Spleen (tissue), 13 donors: ENCODE measurements at regions of chr3 and their contacts with region 1.

Region 1: DNA sequence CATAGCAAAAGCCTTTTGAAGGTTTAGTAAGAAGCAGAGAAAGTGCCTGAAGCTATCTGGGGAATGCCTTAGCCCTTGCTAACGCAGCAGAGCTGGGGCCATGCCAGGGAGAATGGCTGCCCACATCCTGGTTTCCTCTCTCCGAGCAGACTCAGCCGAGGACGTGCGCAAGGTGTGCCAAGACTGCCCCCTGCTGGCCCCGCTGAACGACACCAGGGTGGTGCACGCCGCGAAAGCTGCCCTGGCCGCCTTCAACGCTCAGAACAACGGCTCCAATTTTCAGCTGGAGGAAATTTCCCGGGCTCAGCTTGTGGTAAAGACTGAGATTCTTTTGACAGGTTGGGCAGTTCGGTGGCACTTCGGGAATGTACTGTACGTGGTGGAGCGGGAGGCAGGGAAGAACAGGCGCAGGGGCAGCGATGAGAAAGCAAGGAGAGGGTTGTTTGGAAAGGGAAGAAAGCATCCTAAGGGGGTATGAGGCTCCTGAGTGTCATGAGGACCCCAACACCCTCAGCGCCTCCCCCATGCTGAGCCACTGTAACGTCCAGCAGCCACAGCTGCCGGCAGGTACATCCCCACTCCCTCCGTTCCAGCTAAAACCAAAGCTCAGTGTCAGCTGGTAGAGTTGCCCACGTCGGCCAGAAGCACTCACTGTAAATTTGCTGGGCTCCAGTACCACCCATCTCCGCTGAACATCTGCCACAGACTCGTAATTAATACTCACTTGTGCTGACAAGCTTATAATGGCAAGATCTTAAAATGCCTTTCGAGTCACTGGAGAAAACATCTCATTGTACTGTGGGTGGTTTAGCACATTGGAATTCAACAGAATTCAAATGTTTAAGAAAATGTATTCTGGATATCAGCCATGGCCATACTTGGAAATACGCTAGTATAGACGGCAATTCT is 4.4 kb downstream of the AHSG start:
- DNase-seq: peak; percentile 96
- H3K4me3 ChIP-seq: peak overlapping the region in 2 of 8 donors; percentile 1 to 51
- H3K27ac ChIP-seq: no peak overlapping the region
- H3K4me1 ChIP-seq: peaks cover 0 to 25% (median 22%) of the 10 kb centered on the region in 6 donors
- H3K27me3 ChIP-seq: peaks cover 0 to 73% (median 16%) of the 10 kb centered on the region in 7 donors
- CTCF ChIP-seq: peak; percentile 74 to 94 (median 91)
- POLR2A ChIP-seq: no peak

Region 2: DNA sequence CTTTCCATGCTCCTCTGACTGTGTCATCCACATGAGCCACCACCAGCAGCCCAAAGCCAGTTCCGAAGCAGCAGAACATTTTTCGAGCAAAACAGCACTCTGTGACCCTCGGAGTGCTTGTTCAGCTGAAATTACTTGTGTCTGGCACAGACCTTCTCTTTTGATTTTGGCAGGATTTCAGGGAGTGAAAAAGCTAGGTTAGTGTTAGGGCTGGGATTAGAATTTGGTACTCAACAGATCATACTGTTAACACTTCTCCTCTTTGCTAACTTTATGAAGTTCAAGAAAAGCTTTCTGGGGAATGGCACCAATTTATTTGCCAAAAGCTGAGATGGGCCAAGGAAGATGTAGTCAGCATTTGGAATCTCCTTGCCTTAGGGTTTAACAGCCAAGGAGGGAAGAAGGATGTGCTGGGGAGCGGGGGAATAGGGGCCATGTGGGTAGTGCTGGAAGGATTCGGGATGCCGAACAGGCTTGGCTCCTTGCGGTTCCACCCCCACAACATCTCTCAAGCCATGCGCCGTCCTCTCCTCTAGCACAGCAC is 624.4 kb before region 1 on chr3:
- intact Hi-C with region 1: loop called (anchors 5 kb)
- DNase-seq: no peak
- H3K4me3 ChIP-seq: no peak overlapping the region
- H3K27ac ChIP-seq: no peak overlapping the region
- H3K4me1 ChIP-seq: no peaks in the 10 kb centered on the region
- H3K27me3 ChIP-seq: no peaks in the 10 kb centered on the region
- CTCF ChIP-seq: no peak
- POLR2A ChIP-seq: no peak

Region 3: DNA sequence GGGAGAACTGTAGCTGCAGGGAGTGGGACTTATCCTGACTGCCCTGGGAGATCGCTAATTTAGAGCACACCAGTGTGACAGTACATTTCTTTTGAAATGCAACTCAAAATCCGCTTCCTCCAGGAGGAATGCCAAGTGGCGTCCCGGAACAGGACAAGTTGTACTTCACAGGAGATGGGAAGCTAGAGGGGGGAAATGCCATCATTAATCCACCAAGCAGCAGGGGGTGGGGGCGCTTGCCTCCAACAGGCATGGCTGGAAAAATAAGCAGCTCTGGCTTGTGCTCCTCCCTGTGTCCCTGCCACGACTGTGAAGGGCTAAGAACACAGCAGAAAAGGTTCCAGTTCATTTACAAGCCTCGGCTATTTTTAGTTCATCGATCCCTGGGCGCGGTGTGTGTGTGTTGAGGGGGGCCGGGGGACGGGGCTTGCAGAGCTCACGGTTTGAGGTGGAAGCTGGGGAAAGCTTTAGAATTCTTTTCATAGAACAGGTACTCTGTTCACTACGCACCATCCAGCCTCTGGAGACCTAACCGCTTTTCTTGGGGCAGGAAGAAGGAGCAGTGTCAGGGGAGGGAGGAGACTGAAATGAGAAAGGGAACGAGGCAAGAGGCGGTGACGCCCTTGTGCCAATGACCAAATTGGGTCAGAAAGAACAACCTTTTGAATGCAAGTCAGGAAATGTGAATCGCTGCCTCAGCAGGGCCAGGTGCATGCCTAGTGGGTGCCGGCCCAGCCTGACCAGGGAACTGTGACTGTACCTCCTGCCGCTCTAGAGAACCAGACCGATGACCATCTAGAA is 203.5 kb before region 1 on chr3:
- intact Hi-C with region 1: no loop called
- DNase-seq: peak; percentile 79
- H3K4me3 ChIP-seq: peak overlapping the region in 7 of 8 donors; percentile 10 to 59 (median 26)
- H3K27ac ChIP-seq: peak overlapping the region in 5 of 8 donors; percentile 7 to 67 (median 43)
- H3K4me1 ChIP-seq: peaks cover 6 to 23% (median 17%) of the 10 kb centered on the region in 6 donors
- H3K27me3 ChIP-seq: peaks cover 0 to 8% (median 0%) of the 10 kb centered on the region in 7 donors
- CTCF ChIP-seq: no peak
- POLR2A ChIP-seq: no peak

Region 4: GRCh38 chr3:186821429-186822367 is 204.4 kb after region 1 on chr3:
- intact Hi-C with region 1: loop called (anchors 5 kb)
- DNase-seq: no peak
- H3K4me3 ChIP-seq: no peak overlapping the region
- H3K27ac ChIP-seq: no peak overlapping the region
- H3K4me1 ChIP-seq: peaks cover 10 to 28% (median 19%) of the 10 kb centered on the region in 6 donors
- H3K27me3 ChIP-seq: peaks cover 0 to 37% (median 24%) of the 10 kb centered on the region in 7 donors
- CTCF ChIP-seq: peak in 9 of 11 experiments; percentile 40 to 69 (median 61)
- POLR2A ChIP-seq: no peak